Prostate gland (tissue), 2 donors: ENCODE measurements at regions of chr3 and their contacts with region 1.

Region 1: GRCh38 chr3:70333080-70333479 is 20.6 kb upstream of the MDFIC2 start:
- DNase-seq: no peak
- H3K4me3 ChIP-seq: no peak overlapping the region
- H3K27ac ChIP-seq: no peak overlapping the region
- H3K4me1 ChIP-seq: no peaks in the 10 kb centered on the region
- H3K27me3 ChIP-seq: no peaks in the 10 kb centered on the region
- CTCF ChIP-seq: no peak
- POLR2A ChIP-seq: no peak

Region 2: DNA sequence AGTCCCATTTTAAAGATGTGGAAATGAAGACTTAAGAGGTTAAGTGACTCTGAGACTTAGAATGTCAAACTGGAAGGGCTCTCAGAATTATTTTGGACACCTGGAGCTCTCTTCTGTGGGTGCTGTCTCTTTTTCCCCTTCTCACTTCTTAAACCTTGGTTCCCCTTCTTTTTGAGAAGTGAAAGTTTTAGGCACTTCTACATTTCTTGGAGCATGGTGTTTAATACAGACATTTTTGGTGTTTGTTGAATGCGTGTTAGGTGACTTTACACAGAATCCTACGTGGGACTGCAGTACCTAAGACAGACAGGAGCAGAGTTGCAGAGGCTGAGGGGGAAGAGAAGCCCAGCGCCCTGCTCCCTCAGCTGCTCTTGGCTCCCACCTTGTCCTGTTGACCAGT is 154.0 kb before region 1 on chr3:
- intact Hi-C with region 1: loop called (anchors 5 kb)
- DNase-seq: no peak
- H3K4me3 ChIP-seq: no peak overlapping the region
- H3K27ac ChIP-seq: no peak overlapping the region
- H3K4me1 ChIP-seq: no peaks in the 10 kb centered on the region
- H3K27me3 ChIP-seq: no peaks in the 10 kb centered on the region
- CTCF ChIP-seq: no peak
- POLR2A ChIP-seq: no peak